Astrocyte of the cerebellum (primary cell): ENCODE measurements at regions of chr7 and their contacts with region 1.

Region 1: DNA sequence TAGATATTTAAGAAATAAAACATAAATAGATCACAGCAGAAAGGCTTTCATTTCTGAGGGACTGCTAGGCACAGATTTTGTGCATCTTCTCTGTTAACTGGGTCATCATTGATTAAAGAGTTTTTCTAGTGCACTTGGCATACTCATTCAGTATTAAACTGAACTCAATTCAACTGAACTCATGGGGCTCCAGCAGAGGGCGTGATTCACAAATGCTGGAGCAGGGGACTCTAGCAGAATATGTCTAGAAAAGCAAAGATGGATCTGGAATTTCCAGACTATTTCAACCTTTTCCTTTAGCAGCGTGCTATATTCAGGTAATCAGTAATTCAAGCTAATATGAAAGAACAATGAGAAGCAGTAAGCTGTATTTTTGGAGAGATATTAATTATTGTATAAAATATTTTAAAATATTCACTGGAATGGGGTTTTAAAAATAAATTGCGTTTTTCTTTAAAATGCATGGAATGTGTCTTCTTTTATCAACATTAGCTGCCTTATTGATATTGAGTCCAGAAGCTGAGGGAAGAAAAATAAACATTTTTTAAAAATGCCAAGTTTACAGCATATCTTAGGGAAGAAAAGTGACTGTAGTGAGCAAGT is 296.8 kb upstream of the CACNA2D1 start:
- DNase-seq: peak; percentile 59
- H3K4me3 ChIP-seq: no peak overlapping the region
- CTCF ChIP-seq: peak; percentile 89

Region 2: DNA sequence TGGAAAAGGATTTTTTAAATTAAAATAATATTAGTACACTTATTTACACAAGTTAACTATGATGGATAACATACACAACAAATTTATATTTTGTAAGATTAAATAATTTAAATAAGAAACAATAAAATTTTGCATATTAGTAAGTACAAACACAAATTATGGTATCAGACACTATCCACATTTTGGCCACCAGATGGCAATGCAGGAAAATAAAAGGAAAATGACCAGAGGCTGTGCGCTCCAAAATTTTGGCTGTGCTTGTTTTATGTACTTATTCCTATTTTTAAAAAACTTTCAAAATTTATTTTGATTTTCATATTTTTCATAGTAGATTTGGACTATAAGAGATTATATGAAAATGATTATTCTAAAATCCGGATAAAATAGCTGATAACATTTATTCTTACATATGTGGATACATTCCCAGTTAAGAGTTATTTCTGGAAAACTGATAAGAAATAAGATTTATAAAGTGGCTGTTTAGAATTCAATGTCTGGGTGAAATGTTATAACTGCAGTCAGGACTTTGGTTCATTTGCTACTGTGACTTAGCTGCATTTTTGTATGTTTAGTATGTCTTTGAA is 695.8 kb before region 1 on chr7:
- in situ Hi-C with region 1: loop called (anchors 25 kb)
- DNase-seq: peak; percentile 52
- H3K4me3 ChIP-seq: no peak overlapping the region
- CTCF ChIP-seq: peak; percentile 44

Region 3: DNA sequence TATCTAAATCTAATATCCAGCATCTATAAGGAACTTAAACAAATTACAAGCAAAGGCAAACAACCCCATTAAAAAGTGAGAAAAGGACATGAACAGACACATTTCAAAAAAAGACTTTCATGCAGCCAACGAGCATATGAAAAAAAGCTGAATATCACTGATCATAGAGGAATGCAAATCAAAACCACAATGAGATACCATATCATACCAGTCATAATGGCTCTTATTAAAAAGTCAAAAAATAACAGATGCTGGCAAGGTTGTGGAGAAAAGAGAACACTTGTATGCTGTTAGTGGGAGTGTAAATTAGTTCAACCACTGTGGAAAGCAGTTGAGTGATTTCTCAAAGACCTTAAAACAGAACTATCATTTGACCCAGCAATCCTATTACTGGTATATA is 37.7 kb after region 1 on chr7:
- in situ Hi-C with region 1: no loop called
- DNase-seq: peak; percentile 32
- H3K4me3 ChIP-seq: no peak overlapping the region
- CTCF ChIP-seq: no peak

Region 4: DNA sequence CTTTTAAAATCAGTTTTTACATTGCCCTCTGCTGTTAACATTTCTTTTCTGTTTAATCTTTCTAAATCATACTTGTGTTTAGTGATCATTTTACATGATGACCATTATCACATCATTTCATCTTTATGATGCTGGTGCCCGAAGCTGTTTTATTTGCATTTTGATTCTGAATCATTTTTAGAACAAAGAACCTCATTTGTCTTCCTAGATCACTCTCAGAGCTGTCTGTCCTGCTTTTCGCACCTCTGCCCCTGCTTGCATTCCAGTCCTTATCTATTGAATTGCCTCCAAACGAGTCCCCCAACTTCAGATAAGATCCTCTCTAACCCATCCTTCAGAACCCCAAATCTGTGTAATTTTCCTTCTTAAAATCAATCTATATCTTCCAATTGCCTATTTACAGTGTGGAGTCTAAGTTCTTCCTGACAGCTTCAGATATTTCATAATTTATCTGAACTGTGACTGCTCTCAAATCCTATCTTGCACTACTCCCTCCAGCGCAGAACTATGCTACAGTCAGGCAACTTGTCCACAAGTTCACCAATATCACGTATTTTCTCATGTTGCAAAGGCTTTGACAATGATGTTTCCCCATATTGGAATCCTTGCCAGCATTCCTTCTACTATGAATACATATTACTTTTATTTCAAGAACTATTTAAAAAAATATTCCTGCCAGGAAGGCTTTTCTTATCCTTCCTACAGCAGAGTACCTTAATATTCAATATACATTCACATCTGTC is 49.7 kb after region 1 on chr7:
- in situ Hi-C with region 1: no loop called
- DNase-seq: peak; percentile 13
- H3K4me3 ChIP-seq: no peak overlapping the region
- CTCF ChIP-seq: no peak